Activated CD4-positive, alpha-beta T cell treated with anti-CD3 and anti-CD28 coated beads, Interleukin-2, amount 10 ng/mL, durations not matched to agents 24 days and 14 days (primary cell): ENCODE measurements at regions of chr5 and their contacts with region 1.

Region 1: GRCh38 chr5:141664732-141665461 is 13.7 kb upstream of the FCHSD1 start:
- DNase-seq: peak; percentile 93
- H3K4me3 Mint-ChIP-seq: no peak overlapping the region
- H3K27ac Mint-ChIP-seq: peak overlapping the region; percentile 26
- H3K4me1 Mint-ChIP-seq: peaks cover 4% of the 10 kb centered on the region
- H3K27me3 Mint-ChIP-seq: no peaks in the 10 kb centered on the region

Region 2: GRCh38 chr5:141524604-141525597 is 140.0 kb before region 1 on chr5:
- intact Hi-C with region 1: no loop called
- DNase-seq: peak; percentile 85
- H3K4me3 Mint-ChIP-seq: no peak overlapping the region
- H3K27ac Mint-ChIP-seq: peak overlapping the region; percentile 10
- H3K4me1 Mint-ChIP-seq: peaks cover 29% of the 10 kb centered on the region
- H3K27me3 Mint-ChIP-seq: no peaks in the 10 kb centered on the region

Region 3: GRCh38 chr5:141590127-141590526 is 74.8 kb before region 1 on chr5:
- intact Hi-C with region 1: no loop called
- DNase-seq: no peak
- H3K4me3 Mint-ChIP-seq: no peak overlapping the region
- H3K27ac Mint-ChIP-seq: no peak overlapping the region
- H3K4me1 Mint-ChIP-seq: peaks cover 33% of the 10 kb centered on the region
- H3K27me3 Mint-ChIP-seq: no peaks in the 10 kb centered on the region

Region 4: GRCh38 chr5:141701360-141702119 is 36.6 kb after region 1 on chr5:
- intact Hi-C with region 1: loop called (anchors 2 kb)
- DNase-seq: no peak
- H3K4me3 Mint-ChIP-seq: peak overlapping the region; percentile 82
- H3K27ac Mint-ChIP-seq: no peak overlapping the region
- H3K4me1 Mint-ChIP-seq: peaks cover 18% of the 10 kb centered on the region
- H3K27me3 Mint-ChIP-seq: peaks cover 47% of the 10 kb centered on the region

Region 5: DNA sequence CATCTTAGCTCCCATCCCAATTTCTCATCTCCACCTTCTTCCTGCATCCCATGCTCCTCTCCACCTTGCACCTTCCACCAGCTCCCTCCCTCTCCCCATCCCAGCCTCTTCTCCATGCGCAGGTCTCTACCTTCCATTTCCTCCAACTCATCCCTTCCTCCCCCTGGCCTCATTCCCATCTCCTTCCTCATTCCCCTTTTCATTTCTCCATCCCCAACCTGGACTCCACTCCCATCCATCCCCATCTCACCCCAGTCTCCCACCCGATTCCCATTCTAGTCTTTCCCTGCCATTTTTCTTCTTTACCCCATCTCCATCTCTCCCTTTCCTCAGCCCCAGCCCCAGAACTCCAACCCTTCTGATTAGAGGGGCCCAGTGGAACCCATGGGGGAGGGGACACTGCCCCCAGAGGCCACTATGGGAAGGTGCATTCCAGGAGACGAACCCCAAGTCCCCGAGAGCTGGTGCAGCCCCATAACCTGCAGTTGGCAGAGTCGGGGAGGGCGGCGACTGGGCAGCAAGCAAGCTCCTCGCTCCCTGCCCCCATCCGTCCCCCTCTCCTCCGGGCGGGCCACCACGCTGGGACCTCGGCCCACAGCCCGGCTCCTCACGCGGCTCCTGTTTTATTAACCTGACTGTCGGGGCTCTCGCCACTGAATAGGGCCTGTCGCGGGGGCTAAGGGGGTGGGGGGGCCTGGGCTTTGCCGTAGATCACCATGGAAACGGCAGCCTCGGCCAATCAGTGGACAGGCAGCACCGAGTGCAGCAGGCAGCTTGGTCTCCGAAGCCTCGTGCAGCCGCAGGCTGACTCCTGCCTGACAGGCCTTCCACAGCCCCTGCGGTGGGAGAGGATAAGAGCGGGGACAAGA is 146.6 kb after region 1 on chr5:
- intact Hi-C with region 1: loop called (anchors 10 kb)
- DNase-seq: peak; percentile 72
- H3K4me3 Mint-ChIP-seq: no peak overlapping the region
- H3K27ac Mint-ChIP-seq: no peak overlapping the region
- H3K4me1 Mint-ChIP-seq: no peaks in the 10 kb centered on the region
- H3K27me3 Mint-ChIP-seq: peaks cover 49% of the 10 kb centered on the region